K562 (cell line): ENCODE measurements at regions of chr3 and their contacts with region 1.

Region 1: GRCh38 chr3:45499529-45499928 is 95.0 kb upstream of the LIMD1 start:
- DNase-seq: peak in 1 of 4 experiments; percentile 20
- ATAC-seq: no peak
- H3K4me3 ChIP-seq: no peak overlapping the region
- H3K27ac ChIP-seq: no peak overlapping the region
- H3K4me1 ChIP-seq: no peaks in the 10 kb centered on the region
- H3K27me3 ChIP-seq: no peaks in the 10 kb centered on the region
- CTCF ChIP-seq: peak in 2 of 3 experiments; percentile 20 to 70; a peak in 4 of 6 replicates
- EP300 ChIP-seq: no peak
- POLR2A ChIP-seq: no peak
- RAD21 ChIP-seq: peak; percentile 66 to 67

Region 2: GRCh38 chr3:45333549-45333948 is 166.0 kb before region 1 on chr3:
- CTCF ChIA-PET with region 1: interaction called, 3 read pairs
- POLR2A ChIA-PET with region 1: no interaction called
- in situ Hi-C with region 1: no loop called
- intact Hi-C with region 1: loop called (anchors 10 kb)
- DNase-seq: peak in 2 of 4 experiments; percentile 41 to 49
- ATAC-seq: peak; percentile 81
- H3K4me3 ChIP-seq: no peak overlapping the region
- H3K27ac ChIP-seq: no peak overlapping the region
- H3K4me1 ChIP-seq: peaks cover 0 to 2% of the 10 kb centered on the region in 2 experiments; a peak in 2 of 5 replicates
- H3K27me3 ChIP-seq: peaks cover 47 to 72% of the 10 kb centered on the region in 2 experiments
- CTCF ChIP-seq: peak; percentile 49 to 62 (median 55)
- EP300 ChIP-seq: no peak
- POLR2A ChIP-seq: no peak
- RAD21 ChIP-seq: peak; percentile 24 to 63; a peak in 2 of 4 replicates